ENCODE measurements at regions of chr12 and their contacts with region 1.

Region 1: DNA sequence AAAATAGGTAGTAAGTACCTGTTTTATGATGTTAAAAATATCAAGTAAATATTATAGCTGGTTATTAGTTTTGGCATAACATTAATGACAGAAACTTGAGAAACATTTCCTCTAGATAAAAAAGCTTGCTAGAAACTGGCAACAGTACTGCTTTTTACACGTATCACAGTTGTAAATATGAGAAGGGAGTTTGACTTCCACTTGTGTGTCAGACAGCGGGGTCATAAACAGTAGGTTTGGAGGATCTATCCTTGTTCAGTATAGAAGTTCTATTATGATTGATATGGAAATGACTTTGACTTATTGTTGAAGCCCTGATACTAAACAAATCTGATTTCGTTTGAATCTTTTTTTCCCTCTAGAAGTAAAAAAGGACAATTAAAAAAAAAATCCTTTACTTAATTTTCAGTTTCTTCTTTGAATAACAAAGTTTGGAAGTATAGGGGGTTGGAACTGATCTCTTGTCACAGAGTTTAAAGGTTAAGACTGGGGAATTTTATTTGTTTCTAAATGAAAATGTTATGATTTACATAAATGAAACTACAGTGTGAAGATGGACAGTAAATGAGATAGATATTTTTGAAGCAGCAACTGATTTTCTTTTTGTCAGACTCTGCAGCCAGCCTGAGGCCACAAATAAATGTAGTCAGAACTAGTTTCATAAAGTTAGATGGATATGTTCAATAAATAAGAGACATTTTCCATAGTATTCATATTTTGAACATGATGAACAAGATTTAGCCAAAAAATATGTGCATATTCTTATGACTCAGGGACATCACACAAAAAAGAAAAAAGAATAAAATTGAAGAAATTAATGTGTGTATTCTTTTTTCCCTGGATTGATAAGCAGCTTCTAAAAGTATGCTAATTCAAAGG is 50.1 kb downstream of the WNK1 start:
- DNase-seq: no peak
- H3K4me3 ChIP-seq: no peak overlapping the region
- H3K27ac ChIP-seq: no peak overlapping the region
- H3K4me1 ChIP-seq: no peaks in the 10 kb centered on the region
- H3K27me3 ChIP-seq: no peaks in the 10 kb centered on the region
- CTCF ChIP-seq: no peak

Region 2: DNA sequence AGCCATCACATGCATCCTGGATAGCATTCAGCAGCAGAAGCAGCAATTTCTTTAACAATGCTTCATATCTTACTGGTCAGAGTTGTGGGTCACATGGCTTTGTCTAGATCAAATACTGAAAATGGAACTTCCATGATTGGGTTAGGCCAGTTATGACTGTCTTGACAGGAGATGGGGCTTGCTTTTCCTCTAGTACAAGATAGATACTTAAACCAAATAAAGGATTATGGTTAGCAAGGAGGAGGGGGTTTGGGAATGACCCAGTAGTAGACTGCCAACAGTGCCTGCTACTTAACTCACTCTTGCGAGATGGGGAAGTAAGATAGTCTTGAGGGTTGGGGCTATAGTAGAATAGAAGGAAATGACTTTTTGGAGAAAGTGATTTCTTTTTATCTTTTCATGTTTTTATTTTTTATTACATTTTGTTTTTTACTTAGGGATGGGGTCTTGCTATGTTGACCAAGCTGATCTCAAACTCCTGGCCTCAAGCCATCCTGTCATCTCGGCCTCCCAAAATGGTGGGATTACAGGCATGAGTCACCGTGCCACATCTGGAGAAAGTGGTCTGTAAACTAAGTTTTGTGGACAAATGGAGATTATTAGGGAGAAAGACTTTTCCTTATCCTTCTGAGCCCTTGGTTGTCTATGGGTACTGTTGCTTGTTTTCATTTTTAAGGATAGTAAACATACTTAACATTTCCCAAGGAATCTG is 12.5 kb before region 1 on chr12:
- CTCF ChIA-PET with region 1: no interaction called
- POLR2A ChIA-PET with region 1: no interaction called
- intact Hi-C with region 1: loop called (anchors 2 kb)
- DNase-seq: no peak
- H3K4me3 ChIP-seq: no peak overlapping the region
- H3K27ac ChIP-seq: peak overlapping the region; percentile 21; the same call in 1 of the 2 replicates
- H3K4me1 ChIP-seq: no peaks in the 10 kb centered on the region; the same call in 1 of the 2 replicates
- H3K27me3 ChIP-seq: no peaks in the 10 kb centered on the region
- CTCF ChIP-seq: no peak

Region 3: DNA sequence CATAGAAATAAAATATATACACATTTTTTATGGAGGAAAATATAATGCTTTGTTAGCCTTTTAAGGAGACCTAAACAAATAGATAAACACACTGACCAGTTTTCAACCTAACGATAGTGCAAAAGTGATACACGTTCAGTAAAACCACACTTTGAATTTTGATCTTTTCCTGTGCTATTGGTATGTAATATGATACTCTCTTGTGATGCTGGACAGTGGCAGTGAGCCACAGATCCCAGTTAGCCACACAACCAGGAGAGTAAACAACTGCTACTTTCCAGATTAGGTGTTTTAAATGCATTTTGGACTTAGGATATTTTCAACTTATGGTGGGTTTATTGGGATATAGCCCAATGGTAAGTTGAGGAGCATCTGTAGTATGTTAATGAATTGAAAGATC is 431.6 kb after region 1 on chr12:
- CTCF ChIA-PET with region 1: no interaction called
- POLR2A ChIA-PET with region 1: interaction called, 10 read pairs
- intact Hi-C with region 1: no loop called
- DNase-seq: no peak
- H3K4me3 ChIP-seq: no peak overlapping the region
- H3K27ac ChIP-seq: no peak overlapping the region
- H3K4me1 ChIP-seq: no peaks in the 10 kb centered on the region
- H3K27me3 ChIP-seq: no peaks in the 10 kb centered on the region
- CTCF ChIP-seq: no peak

Measured in PC-9 (cell line).